ENCODE measurements at regions of chr1 and their contacts with region 1.

Region 1: DNA sequence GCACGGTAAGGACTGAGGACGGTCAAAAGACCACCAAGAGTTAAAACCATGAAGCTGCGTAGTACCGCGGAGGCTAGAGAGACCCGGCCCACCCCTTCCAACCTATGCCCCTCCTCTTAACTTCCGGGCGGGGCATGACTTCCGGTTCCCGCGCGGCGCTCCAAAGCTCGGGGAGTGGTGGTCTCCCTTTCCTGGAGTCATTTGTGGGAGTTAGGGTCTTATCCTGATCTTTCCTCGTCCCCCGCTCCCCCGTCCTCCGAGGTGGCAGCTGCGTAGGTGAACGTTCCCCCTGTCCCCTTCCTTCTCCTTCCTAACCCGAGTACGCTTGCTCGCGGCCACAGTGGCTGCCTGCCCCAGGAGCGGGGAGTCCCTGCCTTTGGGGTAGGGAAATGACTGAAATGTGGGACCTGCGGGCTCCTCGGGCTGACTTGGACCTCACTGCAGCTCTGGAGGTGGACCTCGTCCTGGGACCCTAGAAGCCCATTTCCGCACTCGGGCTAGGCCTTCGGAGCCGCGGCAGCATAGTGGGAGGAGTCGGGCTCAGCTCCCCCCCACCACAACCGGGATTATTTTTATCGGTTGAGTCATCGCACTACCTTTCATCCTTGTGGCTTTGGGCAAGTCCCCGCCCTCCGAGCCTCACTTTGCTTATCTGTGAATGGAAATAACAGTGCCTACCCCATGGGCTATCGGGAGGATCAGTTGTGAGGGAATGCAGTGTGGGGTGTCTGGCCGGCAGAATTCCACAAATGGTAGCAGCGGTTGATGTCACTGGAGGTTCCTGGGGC is 24.1 kb downstream of the CELA3A start:
- DNase-seq: peak; percentile 80 to 97 (median 85)
- ATAC-seq: peak; percentile 67
- H3K4me3 ChIP-seq: peak overlapping the region; percentile 100
- H3K4me3 Mint-ChIP-seq: peak overlapping the region; percentile 96
- H3K27ac ChIP-seq: peak overlapping the region; percentile 100
- H3K27ac Mint-ChIP-seq: peak overlapping the region; percentile 93
- H3K4me1 ChIP-seq: peaks cover 57% of the 10 kb centered on the region
- H3K4me1 Mint-ChIP-seq: peaks cover 52% of the 10 kb centered on the region
- H3K27me3 ChIP-seq: no peaks in the 10 kb centered on the region
- H3K27me3 Mint-ChIP-seq: no peaks in the 10 kb centered on the region
- CTCF ChIP-seq: no peak

Region 2: DNA sequence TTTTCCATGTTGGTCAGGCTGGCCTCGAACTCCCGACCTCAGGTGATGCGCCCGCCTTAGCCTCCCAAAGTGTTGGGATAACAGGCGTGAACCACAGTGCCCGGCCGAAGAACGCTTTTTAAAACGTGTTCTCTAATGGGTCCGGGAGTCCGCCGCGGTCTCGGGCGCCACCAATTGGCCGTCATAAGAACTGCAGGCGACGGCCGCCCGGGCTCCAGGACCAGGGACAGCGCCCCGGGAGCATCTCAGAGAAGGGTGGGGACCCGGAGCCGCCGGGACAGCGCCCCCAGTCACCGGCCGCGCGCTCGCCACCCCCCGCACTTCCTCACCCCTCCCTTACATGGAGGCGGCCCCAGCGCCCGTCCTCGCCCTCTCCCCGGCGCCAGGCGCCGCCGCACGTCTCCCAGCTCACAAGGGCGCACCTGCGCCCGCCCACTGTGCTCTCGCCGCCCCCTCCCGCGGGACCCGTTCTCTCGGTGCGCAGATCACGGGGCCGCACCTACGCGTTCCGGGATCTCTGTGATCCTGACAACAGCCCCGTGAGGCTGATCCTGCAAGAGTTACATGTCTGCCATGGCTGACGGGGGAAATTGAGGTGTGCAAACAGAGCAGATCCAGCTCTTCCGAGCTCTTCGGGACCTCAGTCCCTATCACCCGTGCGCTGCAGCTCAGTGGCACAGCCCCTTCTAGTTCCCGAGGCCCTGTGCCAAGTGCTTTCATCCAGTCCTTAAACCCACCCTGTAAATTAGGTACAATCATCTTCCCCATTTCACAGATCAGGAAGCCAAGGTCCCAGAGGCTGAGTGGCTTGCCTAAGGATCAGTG is 366.3 kb before region 1 on chr1:
- CTCF ChIA-PET with region 1: no interaction called
- POLR2A ChIA-PET with region 1: no interaction called
- intact Hi-C with region 1: loop called in 1 of 2 experiments (anchors 5 kb)
- DNase-seq: peak; percentile 64 to 92 (median 77)
- ATAC-seq: peak; percentile 97
- H3K4me3 ChIP-seq: no peak overlapping the region
- H3K4me3 Mint-ChIP-seq: peak overlapping the region; percentile 30
- H3K27ac ChIP-seq: no peak overlapping the region
- H3K27ac Mint-ChIP-seq: no peak overlapping the region
- H3K4me1 ChIP-seq: peaks cover 8% of the 10 kb centered on the region
- H3K4me1 Mint-ChIP-seq: peaks cover 6% of the 10 kb centered on the region
- H3K27me3 ChIP-seq: peaks cover 9 to 17% of the 10 kb centered on the region in 2 experiments
- H3K27me3 Mint-ChIP-seq: peaks cover 35% of the 10 kb centered on the region
- CTCF ChIP-seq: peak; percentile 81

Region 3: GRCh38 chr1:21782868-21783678 is 242.5 kb before region 1 on chr1 and contains the start of gene USP48:
- CTCF ChIA-PET with region 1: interaction called, 6 read pairs
- POLR2A ChIA-PET with region 1: interaction called, 35 read pairs
- intact Hi-C with region 1: loop called (anchors 2 kb)
- DNase-seq: peak; percentile 93 to 99 (median 96)
- ATAC-seq: peak; percentile 82
- H3K4me3 ChIP-seq: peak within 1 kb of the TSS; percentile 100
- H3K4me3 Mint-ChIP-seq: peak within 1 kb of the TSS; percentile 99
- H3K27ac ChIP-seq: peak within 1 kb of the TSS; percentile 99 to 100
- H3K27ac Mint-ChIP-seq: peak within 1 kb of the TSS; percentile 100
- H3K4me1 ChIP-seq: peaks cover 38% of the 10 kb centered on the region
- H3K4me1 Mint-ChIP-seq: peaks cover 39% of the 10 kb centered on the region
- H3K27me3 ChIP-seq: no peaks in the 10 kb centered on the region
- H3K27me3 Mint-ChIP-seq: no peaks in the 10 kb centered on the region
- CTCF ChIP-seq: no peak
- total RNA-seq, gene USP48: 73.3 to 76.0 TPM

Region 4: DNA sequence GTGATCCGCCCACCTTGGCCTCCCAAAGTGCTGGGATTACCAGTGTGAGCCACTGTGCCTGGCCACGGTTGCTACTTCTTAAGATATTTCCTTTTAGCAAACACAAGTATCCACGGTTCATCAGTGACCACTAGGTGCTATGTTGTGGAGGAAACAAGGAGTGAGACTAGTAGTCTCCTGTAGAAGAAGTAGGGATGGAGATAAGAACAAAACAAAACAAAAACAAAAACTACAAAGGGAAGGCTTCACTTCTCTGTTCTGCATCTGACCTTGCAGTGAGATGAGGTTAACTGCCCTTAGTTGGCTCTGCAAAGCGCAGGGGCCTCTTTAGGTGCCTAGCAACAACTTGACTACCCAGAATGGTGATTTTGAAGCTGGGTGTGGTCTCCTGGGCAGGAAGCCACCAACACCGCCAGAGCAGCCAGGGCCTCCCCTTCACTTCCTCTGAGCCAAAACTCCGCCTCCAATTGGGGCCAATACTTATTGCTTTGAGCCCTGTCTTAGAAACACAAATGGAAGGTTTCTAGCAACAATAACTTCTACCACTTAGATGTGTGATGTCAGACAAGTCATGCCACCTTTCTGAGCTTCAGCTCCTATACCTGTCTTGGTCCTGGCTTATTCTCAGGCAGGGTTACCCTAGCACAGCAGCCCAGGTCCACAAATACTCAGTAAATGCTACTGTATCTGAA is 14.2 kb after region 1 on chr1:
- CTCF ChIA-PET with region 1: interaction called, 58 read pairs
- POLR2A ChIA-PET with region 1: interaction called, 470 read pairs
- intact Hi-C with region 1: loop called (anchors 1 kb)
- DNase-seq: peak; percentile 79 to 98 (median 87)
- ATAC-seq: peak; percentile 92
- H3K4me3 ChIP-seq: peak overlapping the region; percentile 44
- H3K4me3 Mint-ChIP-seq: peak overlapping the region; percentile 59
- H3K27ac ChIP-seq: peak overlapping the region; percentile 95 to 97
- H3K27ac Mint-ChIP-seq: peak overlapping the region; percentile 99
- H3K4me1 ChIP-seq: peaks cover 82% of the 10 kb centered on the region
- H3K4me1 Mint-ChIP-seq: peaks cover 60% of the 10 kb centered on the region
- H3K27me3 ChIP-seq: no peaks in the 10 kb centered on the region
- H3K27me3 Mint-ChIP-seq: no peaks in the 10 kb centered on the region
- CTCF ChIP-seq: no peak

Region 5: DNA sequence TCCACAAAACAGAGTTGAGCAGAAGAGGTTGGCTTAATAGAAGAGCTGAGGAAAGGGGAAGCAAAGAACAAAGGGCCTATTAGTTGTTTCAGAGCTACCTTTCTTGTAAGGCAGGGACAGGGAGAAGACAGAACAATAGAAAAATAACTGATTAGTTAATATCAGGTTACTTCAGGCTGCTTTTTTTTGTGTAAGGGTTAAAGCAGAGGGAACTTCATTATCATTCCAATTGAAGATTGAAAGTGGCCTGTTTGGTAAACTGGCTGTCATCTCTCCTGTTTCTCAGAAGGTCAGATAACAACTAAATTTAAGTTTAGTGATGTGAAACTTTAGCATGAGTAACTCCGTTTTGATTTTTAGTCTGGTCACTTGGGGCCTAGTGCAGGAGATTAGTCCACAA is 49.2 kb after region 1 on chr1:
- CTCF ChIA-PET with region 1: interaction called, 4 read pairs
- POLR2A ChIA-PET with region 1: interaction called, 32 read pairs
- intact Hi-C with region 1: no loop called
- DNase-seq: no peak
- ATAC-seq: no peak
- H3K4me3 ChIP-seq: no peak overlapping the region
- H3K4me3 Mint-ChIP-seq: peak overlapping the region; percentile 71
- H3K27ac ChIP-seq: no peak overlapping the region
- H3K27ac Mint-ChIP-seq: peak overlapping the region; percentile 83
- H3K4me1 ChIP-seq: peaks cover 77% of the 10 kb centered on the region
- H3K4me1 Mint-ChIP-seq: peaks cover 84% of the 10 kb centered on the region
- H3K27me3 ChIP-seq: no peaks in the 10 kb centered on the region
- H3K27me3 Mint-ChIP-seq: no peaks in the 10 kb centered on the region
- CTCF ChIP-seq: no peak

Region 6: GRCh38 chr1:22089787-22090186 is 64.2 kb after region 1 on chr1:
- CTCF ChIA-PET with region 1: interaction called, 12 read pairs
- POLR2A ChIA-PET with region 1: interaction called, 27 read pairs
- intact Hi-C with region 1: loop called (anchors 5 kb)
- DNase-seq: peak in 2 of 14 experiments; percentile 17 to 30
- ATAC-seq: no peak
- H3K4me3 ChIP-seq: peak overlapping the region; percentile 24
- H3K4me3 Mint-ChIP-seq: peak overlapping the region; percentile 74
- H3K27ac ChIP-seq: peak overlapping the region; percentile 3 to 25
- H3K27ac Mint-ChIP-seq: peak overlapping the region; percentile 81
- H3K4me1 ChIP-seq: peaks cover 35% of the 10 kb centered on the region
- H3K4me1 Mint-ChIP-seq: peaks cover 94% of the 10 kb centered on the region
- H3K27me3 ChIP-seq: no peaks in the 10 kb centered on the region
- H3K27me3 Mint-ChIP-seq: no peaks in the 10 kb centered on the region
- CTCF ChIP-seq: no peak

Region 7: DNA sequence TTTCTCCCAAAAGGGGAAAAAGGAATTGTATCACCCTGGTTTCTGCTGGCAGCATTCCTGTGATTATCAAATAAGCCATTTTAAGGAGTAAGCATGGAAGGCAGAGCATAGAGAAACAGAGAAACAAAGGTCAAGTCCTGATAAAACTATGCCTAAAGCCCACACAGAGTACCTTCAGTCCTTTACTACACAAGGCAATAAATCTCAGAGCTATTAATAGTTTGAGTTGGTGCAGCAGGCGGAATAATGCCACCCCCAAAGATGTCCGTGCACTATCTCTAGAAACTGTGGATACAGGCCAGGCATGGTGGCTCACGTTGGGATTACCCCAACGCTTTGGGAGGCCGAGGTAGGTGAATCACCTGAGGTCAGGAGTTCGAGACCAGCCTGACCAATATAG is 368.0 kb after region 1 on chr1:
- CTCF ChIA-PET with region 1: no interaction called
- POLR2A ChIA-PET with region 1: no interaction called
- intact Hi-C with region 1: no loop called
- DNase-seq: no peak
- ATAC-seq: no peak
- H3K4me3 ChIP-seq: no peak overlapping the region
- H3K4me3 Mint-ChIP-seq: no peak overlapping the region
- H3K27ac ChIP-seq: no peak overlapping the region
- H3K27ac Mint-ChIP-seq: no peak overlapping the region
- H3K4me1 ChIP-seq: peaks cover 7% of the 10 kb centered on the region
- H3K4me1 Mint-ChIP-seq: peaks cover 18% of the 10 kb centered on the region
- H3K27me3 ChIP-seq: peaks cover 46 to 61% of the 10 kb centered on the region in 2 experiments
- H3K27me3 Mint-ChIP-seq: peaks cover 94% of the 10 kb centered on the region
- CTCF ChIP-seq: no peak